ENCODE measurements at regions of chr7 and their contacts with region 1.

Region 1: DNA sequence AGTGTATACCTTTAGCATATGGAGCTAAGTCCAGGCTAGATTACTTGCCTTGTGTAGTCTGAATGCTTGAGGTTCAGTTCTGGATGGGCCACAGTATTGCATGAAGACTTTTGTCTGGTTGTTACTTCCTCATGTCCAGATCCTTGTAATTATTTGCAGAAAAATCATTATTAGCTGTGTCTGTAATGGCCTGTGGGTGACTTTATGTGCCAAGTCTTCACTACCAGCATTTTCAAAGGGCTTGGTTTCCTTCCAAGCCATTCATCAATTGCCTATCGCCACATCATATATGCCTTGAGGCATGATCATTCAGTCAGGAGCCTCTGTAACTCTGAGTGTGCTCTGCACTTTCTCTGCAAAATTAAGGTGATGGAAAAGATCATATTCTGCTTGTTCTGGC is 13.8 kb upstream of the HDAC9 start:
- DNase-seq: no peak
- H3K4me3 ChIP-seq: no peak overlapping the region
- H3K27ac ChIP-seq: peak overlapping the region in 1 of 2 donors; percentile 20
- H3K4me1 ChIP-seq: peaks cover 0 to 8% of the 10 kb centered on the region in 2 donors
- H3K27me3 ChIP-seq: no peaks in the 10 kb centered on the region
- CTCF ChIP-seq: no peak

Region 2: GRCh38 chr7:18426564-18427226 is 55.1 kb before region 1 on chr7:
- intact Hi-C with region 1: loop called (anchors 5 kb)
- DNase-seq: no peak
- H3K4me3 ChIP-seq: no peak overlapping the region
- H3K27ac ChIP-seq: no peak overlapping the region
- H3K4me1 ChIP-seq: peaks cover 0 to 12% of the 10 kb centered on the region in 2 donors
- H3K27me3 ChIP-seq: no peaks in the 10 kb centered on the region
- CTCF ChIP-seq: no peak

Region 3: DNA sequence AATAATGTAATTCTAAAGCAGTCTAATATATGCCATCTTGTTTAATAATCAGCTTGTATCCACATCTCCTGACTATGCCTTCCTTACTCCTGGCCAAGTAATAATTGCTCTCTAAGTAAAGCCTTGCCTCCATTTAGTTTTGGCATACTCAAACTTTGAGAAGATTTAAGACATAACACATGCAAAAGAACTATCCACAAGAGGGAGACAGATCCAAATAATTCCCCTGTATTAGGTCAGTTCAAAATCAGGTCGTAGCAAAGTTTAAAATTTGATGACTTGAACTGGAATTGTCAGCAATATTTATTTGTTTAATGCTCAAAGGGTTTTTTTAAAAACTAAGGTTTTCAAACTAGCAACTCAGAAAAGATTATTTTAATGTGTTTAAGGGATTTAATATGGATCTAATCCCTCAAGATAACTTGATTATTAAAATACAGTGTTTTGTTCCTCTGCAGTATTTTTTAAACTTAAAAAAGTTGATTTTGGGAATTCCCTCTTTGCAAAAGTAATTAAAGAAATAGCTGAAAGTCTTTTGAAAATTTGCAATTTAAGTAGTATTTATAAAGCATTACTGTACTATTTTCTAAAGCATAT is 109.1 kb after region 1 on chr7:
- intact Hi-C with region 1: no loop called
- DNase-seq: no peak
- H3K4me3 ChIP-seq: no peak overlapping the region
- H3K27ac ChIP-seq: no peak overlapping the region
- H3K4me1 ChIP-seq: no peaks in the 10 kb centered on the region
- H3K27me3 ChIP-seq: no peaks in the 10 kb centered on the region
- CTCF ChIP-seq: peak; percentile 23 to 66 (median 46)